ENCODE measurements at regions of chr6 and their contacts with region 1.

Region 1: DNA sequence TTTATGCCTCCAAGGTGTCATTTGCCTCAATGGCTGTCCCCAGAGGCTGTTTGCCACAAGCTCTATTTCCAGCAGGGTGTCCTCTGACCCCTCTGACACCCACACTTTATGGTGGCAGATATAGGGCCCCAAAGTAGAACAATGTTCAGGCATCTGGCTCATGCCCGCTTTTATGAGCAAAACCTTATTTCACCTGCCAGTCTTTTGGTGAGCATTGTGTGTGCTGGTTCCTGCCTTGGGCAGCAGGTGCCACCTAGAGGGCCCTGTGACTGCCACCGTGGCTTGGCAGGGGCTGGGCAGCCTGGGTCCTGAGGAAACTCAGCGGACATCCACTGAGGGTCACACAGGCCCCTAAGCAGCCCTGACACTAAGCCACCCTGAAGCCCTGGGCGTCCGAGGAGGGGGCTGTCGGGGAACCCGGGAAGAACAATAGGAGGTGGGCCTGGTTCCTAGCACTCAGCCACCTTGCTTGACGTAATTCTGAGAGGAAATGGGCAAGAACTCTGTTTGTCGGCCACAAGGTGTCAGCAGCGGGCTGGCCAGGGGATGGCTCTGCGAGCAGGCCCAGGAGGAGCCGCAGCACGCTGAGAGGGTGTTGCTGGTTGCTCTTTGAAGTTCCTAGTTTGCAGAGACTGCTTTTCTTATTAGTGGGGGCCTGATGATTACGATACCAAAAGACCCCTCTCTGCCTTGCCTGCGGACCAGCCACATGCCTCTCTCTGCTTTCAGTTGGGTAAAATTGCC is 148.9 kb downstream of the SCML4 start:
- DNase-seq: peak; percentile 73 to 92
- H3K4me3 ChIP-seq: peak overlapping the region in 3 of 4 experiments; percentile 16 to 47 (median 25); a peak in 4 of 8 replicates
- H3K27ac ChIP-seq: no peak overlapping the region
- H3K4me1 ChIP-seq: peaks cover 5 to 10% (median 7%) of the 10 kb centered on the region in 4 experiments
- H3K27me3 ChIP-seq: no peaks in the 10 kb centered on the region; a peak in 1 of 7 replicates
- CTCF ChIP-seq: peak; percentile 92 to 95 (median 93)
- EP300 ChIP-seq: no peak
- POLR2A ChIP-seq: no peak
- RAD21 ChIP-seq: peak; percentile 89 to 92

Region 2: DNA sequence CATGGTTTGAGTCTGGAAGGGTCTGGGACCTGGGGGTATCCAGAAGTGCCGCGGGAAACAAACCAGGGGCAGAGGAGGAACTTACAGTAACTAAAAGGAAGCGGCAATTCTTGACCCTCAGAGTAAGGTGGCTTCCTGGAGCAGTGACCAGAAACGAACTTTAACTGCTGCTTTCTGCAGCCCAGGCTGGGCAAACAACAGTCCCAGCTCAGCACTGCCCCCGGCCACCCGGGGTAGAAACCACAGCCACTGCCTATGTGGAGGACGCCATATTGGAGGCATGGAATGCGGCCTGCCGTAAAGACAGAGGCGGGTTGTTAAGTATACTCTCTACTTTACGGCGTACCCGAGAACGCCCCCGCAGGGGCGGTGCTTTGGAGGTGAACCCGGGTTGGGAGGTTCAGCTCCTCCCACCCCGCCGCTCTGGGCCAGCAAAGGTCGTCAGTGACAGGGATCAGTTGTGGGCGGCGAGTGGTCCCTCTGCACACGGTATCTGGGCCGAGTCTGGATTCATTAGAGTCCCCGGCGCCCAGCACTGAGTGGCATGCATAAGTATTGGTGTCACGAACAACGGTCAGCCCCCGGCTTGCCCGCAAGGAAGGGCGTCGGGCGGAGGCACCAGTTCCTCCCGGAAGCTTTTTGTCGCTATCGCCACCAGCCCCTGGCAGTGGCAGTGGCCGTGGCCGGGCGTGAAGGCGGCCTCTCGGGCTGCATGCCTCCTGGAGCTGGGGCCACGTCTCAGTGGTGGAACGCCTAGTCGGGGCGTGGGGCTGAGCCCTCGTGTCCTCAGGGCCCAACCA is 215.7 kb before region 1 on chr6 and contains the start of gene PDSS2:
- CTCF ChIA-PET with region 1: no interaction called
- POLR2A ChIA-PET with region 1: no interaction called
- DNase-seq: peak; percentile 89 to 95
- H3K4me3 ChIP-seq: peak within 1 kb of the TSS; percentile 90 to 100 (median 95)
- H3K27ac ChIP-seq: peak within 1 kb of the TSS; percentile 70
- H3K4me1 ChIP-seq: peaks cover 0 to 3% (median 1%) of the 10 kb centered on the region in 4 experiments; a peak in 2 of 7 replicates
- H3K27me3 ChIP-seq: no peaks in the 10 kb centered on the region
- CTCF ChIP-seq: peak; percentile 52 to 64 (median 56)
- EP300 ChIP-seq: no peak
- POLR2A ChIP-seq: peak; percentile 58 to 85
- RAD21 ChIP-seq: peak; percentile 43; a peak in 3 of 4 replicates
- total RNA-seq, gene PDSS2: 15.6 and 16.1 TPM in 2 replicates

Region 3: DNA sequence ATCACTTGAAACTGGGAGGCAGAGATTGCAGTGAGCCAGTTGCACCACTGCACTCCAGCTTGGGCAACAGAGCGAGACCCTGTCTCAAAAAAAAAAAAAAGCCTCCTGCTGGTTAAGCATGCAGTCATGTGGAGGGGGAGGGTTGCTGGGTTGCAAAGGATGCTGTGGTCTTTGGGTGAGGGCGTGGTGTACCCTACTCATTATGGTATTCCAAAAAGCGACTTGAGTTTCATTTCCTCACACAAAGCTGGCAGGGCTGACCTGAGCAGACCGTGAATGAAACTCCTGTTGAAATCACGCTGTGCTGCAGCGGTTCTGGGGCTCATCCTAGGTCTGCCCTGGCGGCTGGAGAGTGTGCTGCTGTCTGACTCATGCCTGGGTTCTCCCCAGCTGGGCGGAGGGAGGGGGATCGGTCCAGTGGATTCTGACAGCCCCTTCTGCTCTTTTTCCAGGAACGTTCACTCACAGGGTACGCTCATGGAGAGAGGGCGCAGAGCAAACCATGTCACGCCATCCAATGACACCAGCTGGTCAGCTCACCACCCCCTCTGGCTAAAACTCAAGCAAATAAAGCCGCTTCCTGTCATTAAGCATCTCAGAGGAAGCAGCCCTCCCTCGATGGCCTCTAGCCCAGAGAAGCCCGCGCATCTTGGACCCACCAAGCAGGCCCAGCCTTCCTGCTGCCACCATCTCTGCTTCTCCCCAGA is 17.3 kb before region 1 on chr6:
- CTCF ChIA-PET with region 1: interaction called, 14 read pairs
- POLR2A ChIA-PET with region 1: no interaction called
- DNase-seq: no peak
- H3K4me3 ChIP-seq: no peak overlapping the region
- H3K27ac ChIP-seq: no peak overlapping the region
- H3K4me1 ChIP-seq: peaks cover 0 to 7% (median 6%) of the 10 kb centered on the region in 4 experiments; a peak in 4 of 7 replicates
- H3K27me3 ChIP-seq: no peaks in the 10 kb centered on the region; a peak in 1 of 7 replicates
- CTCF ChIP-seq: peak in 1 of 3 experiments; percentile 4; a peak in 1 of 4 replicates
- EP300 ChIP-seq: no peak
- POLR2A ChIP-seq: no peak
- RAD21 ChIP-seq: no peak; a peak in 1 of 4 replicates

Region 4: GRCh38 chr6:107698146-107698545 is 23.0 kb after region 1 on chr6:
- CTCF ChIA-PET with region 1: interaction called, 47 read pairs
- POLR2A ChIA-PET with region 1: no interaction called
- DNase-seq: no peak
- H3K4me3 ChIP-seq: no peak overlapping the region
- H3K27ac ChIP-seq: no peak overlapping the region
- H3K4me1 ChIP-seq: peaks cover 0 to 10% (median 6%) of the 10 kb centered on the region in 4 experiments; a peak in 4 of 7 replicates
- H3K27me3 ChIP-seq: no peaks in the 10 kb centered on the region
- CTCF ChIP-seq: no peak
- EP300 ChIP-seq: no peak
- POLR2A ChIP-seq: no peak
- RAD21 ChIP-seq: no peak

Region 5: DNA sequence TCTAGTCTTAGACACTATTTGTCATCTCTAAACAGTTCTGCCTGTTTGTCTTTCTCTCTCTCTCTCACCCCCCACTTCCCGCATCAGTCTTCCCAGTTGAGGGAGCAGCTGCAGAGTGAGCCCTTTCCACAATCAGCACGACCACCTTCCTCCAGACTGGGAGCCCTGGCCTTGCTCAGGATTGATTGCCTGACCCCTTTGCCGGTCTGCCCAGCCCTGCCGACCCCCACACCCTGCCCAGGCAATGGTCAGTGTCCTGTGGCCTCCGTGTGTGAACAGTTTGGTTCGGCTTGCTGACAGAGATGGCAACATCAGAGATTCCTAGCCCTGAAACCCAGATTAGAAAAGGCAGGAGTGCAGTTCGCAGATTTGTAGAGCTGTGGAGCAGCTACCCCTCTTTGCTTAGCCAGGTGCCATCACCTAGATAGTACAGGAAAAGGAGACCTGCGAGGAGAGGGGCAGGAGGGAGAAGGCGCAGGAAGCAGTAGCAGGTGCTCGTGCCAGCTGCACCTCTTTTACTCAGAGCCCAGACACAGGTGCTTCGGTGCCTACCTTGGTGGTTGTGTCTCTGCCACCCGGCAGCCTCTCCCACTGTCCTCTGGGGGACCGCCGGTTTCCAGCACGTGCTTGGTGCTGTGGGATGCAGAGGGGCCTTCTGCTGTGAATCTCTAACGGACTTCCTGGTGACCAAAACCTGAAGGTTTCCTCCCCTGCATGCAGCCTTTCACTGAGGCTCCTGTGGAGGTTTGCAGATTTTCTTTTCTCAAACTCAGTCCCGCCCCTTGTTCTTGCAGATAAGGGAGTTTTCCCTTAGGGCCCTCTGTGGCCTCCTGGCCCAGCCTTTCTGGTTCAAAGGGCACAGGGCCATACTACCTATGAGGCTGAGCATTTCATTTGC is 56.5 kb after region 1 on chr6:
- CTCF ChIA-PET with region 1: interaction called, 13 read pairs
- POLR2A ChIA-PET with region 1: no interaction called
- DNase-seq: no peak
- H3K4me3 ChIP-seq: no peak overlapping the region
- H3K27ac ChIP-seq: no peak overlapping the region
- H3K4me1 ChIP-seq: peaks cover 0 to 1% (median under 1%) of the 10 kb centered on the region in 4 experiments; a peak in 2 of 7 replicates
- H3K27me3 ChIP-seq: 0 out of 7 replicates have a peak, but pooled peaks cover 0 to 2% (median 0%) of the 10 kb centered on the region in 4 experiments
- CTCF ChIP-seq: no peak
- EP300 ChIP-seq: no peak
- POLR2A ChIP-seq: no peak
- RAD21 ChIP-seq: no peak

Region 6: GRCh38 chr6:107866606-107867301 is 191.6 kb after region 1 on chr6:
- CTCF ChIA-PET with region 1: interaction called, 14 read pairs
- POLR2A ChIA-PET with region 1: no interaction called
- DNase-seq: no peak
- H3K4me3 ChIP-seq: no peak overlapping the region
- H3K27ac ChIP-seq: no peak overlapping the region
- H3K4me1 ChIP-seq: peaks cover 0 to 14% (median 10%) of the 10 kb centered on the region in 4 experiments
- H3K27me3 ChIP-seq: no peaks in the 10 kb centered on the region
- CTCF ChIP-seq: peak in 2 of 3 experiments; percentile 44 to 59; a peak in 2 of 4 replicates
- EP300 ChIP-seq: no peak
- POLR2A ChIP-seq: no peak; a peak in 1 of 3 replicates
- RAD21 ChIP-seq: peak; percentile 39 to 49

Measured in H1 (cell line).